ENCODE measurements at regions of chr15 and their contacts with region 1.

Region 1: DNA sequence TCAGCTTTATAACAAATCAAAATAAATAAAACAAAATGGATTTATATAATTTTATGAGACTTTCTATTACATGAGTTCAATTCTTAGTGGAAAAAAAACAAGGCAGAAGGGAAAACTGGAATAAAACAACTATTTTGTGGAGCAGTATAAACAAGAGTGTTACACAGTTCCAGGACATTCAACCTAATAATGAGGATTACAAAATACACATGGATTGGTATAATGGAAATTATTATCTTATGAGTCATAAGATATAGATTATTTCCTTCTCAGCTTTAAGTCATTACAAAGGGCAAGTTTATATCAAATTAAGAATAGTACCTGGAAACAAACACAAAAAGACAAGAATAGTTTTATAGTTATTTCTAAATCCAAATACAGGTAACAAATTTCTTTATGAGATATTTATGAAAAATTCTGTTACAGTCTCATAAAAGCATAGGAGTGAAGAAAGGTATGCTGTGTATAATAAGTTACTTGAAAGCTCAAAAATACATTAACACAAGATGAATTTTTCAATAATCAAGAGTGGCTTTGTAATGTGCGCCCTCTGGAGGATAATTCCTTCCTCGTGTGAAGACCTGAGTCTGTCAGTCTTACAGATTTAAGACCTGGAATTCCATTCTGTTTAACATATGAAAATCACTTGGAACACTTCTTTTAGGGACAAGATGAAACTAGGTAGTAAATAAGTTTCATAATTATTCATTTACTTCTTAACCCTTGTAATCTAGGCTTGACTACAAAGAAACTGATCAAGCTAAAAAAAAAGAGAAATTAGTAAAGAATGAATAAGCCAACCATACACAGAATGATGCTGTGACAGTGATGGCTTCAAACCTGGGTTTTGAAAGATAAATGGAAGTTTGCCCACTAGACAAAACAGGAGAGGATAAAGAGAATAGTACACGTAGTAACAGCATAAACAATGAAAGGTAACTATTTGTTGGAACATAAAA is 9.5 kb downstream of the COPS2 start:
- DNase-seq: peak; percentile 45
- ATAC-seq: peak; percentile 63
- H3K4me3 ChIP-seq: no peak overlapping the region
- H3K27ac ChIP-seq: no peak overlapping the region
- H3K4me1 ChIP-seq: no peaks in the 10 kb centered on the region; the same call in 1 of the 2 replicates
- H3K27me3 ChIP-seq: no peaks in the 10 kb centered on the region
- CTCF ChIP-seq: peak; percentile 62
- EP300 ChIP-seq: no peak
- POLR2A ChIP-seq: no peak
- RAD21 ChIP-seq: no peak

Region 2: DNA sequence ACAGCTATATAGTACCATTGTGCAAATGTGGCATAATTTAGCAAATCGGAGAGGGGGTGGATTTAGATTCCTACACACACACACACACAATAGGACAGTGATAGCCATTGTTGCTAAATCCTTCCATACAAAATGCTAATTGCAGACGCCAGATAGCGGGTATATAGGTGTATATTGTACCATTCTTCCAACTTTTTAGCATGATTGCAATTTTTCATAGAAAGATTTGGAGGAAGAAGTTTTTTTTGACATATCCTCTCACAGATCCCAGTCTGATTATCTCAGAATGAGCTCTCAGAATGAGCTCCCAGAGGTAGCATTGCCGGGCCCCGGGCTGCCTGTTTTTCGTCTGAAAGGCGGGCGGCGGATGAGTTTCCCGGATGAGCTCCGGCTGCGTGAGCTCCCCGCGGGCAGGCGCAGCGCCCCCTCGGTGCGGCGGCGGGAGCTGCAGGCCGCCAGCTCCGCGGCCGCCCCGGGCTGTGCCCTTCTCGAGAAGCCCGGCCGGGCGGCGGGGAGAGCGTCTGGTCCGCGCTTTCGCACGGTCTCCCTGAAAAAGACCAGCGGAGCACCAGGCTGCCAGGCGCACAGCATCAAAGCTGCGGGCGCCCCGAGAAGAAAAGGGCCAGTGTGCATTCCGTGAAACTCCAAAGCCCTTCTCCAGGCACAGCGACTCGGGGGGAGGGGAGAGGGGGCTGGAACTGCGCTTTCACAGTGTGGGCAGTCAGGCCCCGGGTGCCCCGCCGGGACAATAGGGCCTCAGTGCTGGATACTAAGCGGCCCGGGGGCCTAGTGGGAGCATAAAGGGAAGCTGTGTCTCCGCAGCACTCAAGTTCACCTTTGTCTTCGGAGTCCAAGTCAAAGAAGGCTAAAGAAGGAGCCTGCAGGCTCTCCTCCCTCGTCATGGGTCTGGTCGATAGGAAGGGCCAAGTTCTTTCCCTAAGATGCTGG is 170.2 kb before region 1 on chr15:
- CTCF ChIA-PET with region 1: no interaction called
- POLR2A ChIA-PET with region 1: interaction called, 3 read pairs
- in situ Hi-C with region 1: no loop called
- intact Hi-C with region 1: loop called (anchors 2 kb)
- DNase-seq: peak; percentile 65
- ATAC-seq: peak; percentile 94
- H3K4me3 ChIP-seq: peak overlapping the region; percentile 69 to 80 (median 71)
- H3K27ac ChIP-seq: peak overlapping the region; percentile 51
- H3K4me1 ChIP-seq: peaks cover 18% of the 10 kb centered on the region
- H3K27me3 ChIP-seq: peaks cover 3 to 6% of the 10 kb centered on the region in 2 experiments; a peak in 3 of 5 replicates
- CTCF ChIP-seq: peak; percentile 76
- EP300 ChIP-seq: no peak; a peak in 1 of 4 replicates
- POLR2A ChIP-seq: peak in 1 of 2 experiments; percentile 14; a peak in 2 of 4 replicates
- RAD21 ChIP-seq: peak; percentile 57

Measured in HepG2 (cell line).